ENCODE measurements at regions of chr7 and their contacts with region 1.

Region 1: GRCh38 chr7:111089822-111090426 is 1.0 kb upstream of the LRRN3 start:
- DNase-seq: no peak
- ATAC-seq: peak; percentile 71
- H3K4me3 ChIP-seq: no peak overlapping the region
- H3K27ac ChIP-seq: no peak overlapping the region
- H3K4me1 ChIP-seq: peaks cover 17% of the 10 kb centered on the region
- H3K27me3 ChIP-seq: no peaks in the 10 kb centered on the region
- CTCF ChIP-seq: peak; percentile 62 to 71 (median 68); a peak in 5 of 6 replicates
- EP300 ChIP-seq: no peak
- POLR2A ChIP-seq: no peak
- RAD21 ChIP-seq: peak; percentile 79

Region 2: DNA sequence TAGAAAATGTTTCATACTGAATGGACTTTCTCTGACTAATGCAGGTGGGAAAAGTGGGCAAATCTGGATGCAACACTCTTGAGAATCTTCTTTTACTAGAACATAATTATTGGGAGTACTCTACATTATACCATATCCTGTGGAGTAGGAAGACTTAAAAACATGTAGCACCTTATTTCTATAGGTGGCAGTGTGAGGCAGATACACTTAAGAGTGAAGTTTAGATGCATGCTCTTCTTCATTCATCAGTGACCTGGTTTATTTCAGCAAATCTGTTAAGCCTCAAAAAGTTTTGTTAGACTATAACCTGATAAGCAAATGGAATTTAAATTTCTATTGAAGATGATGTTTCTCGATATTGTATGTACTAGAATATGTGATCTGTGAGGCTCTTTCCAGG is 1086.1 kb before region 1 on chr7:
- CTCF ChIA-PET with region 1: no interaction called
- POLR2A ChIA-PET with region 1: no interaction called
- RAD21 ChIA-PET with region 1: no interaction called
- SMC1A ChIA-PET with region 1: no interaction called
- in situ Hi-C with region 1: no loop called
- intact Hi-C with region 1: loop called (anchors 10 kb)
- DNase-seq: no peak
- ATAC-seq: peak; percentile 57; the same call in 2 of the 3 replicates
- H3K4me3 ChIP-seq: no peak overlapping the region
- H3K27ac ChIP-seq: no peak overlapping the region
- H3K4me1 ChIP-seq: no peaks in the 10 kb centered on the region
- H3K27me3 ChIP-seq: no peaks in the 10 kb centered on the region
- CTCF ChIP-seq: no peak; a peak in 1 of 6 replicates
- EP300 ChIP-seq: no peak
- POLR2A ChIP-seq: no peak
- RAD21 ChIP-seq: peak; percentile 31; the same call in 1 of the 2 replicates

Region 3: GRCh38 chr7:111324228-111324627 is 234.3 kb after region 1 on chr7:
- CTCF ChIA-PET with region 1: no interaction called
- POLR2A ChIA-PET with region 1: no interaction called
- RAD21 ChIA-PET with region 1: no interaction called
- SMC1A ChIA-PET with region 1: no interaction called
- in situ Hi-C with region 1: no loop called
- intact Hi-C with region 1: loop called (anchors 5 kb)
- DNase-seq: peak; percentile 9
- ATAC-seq: peak; percentile 86
- H3K4me3 ChIP-seq: no peak overlapping the region
- H3K27ac ChIP-seq: no peak overlapping the region
- H3K4me1 ChIP-seq: peaks cover 3% of the 10 kb centered on the region; the same call in 1 of the 2 replicates
- H3K27me3 ChIP-seq: no peaks in the 10 kb centered on the region
- CTCF ChIP-seq: no peak
- EP300 ChIP-seq: 0 out of 4 replicates have a peak, but pooled peaks of 1 of the 2 experiments have one; percentile 11
- POLR2A ChIP-seq: no peak
- RAD21 ChIP-seq: no peak

Region 4: DNA sequence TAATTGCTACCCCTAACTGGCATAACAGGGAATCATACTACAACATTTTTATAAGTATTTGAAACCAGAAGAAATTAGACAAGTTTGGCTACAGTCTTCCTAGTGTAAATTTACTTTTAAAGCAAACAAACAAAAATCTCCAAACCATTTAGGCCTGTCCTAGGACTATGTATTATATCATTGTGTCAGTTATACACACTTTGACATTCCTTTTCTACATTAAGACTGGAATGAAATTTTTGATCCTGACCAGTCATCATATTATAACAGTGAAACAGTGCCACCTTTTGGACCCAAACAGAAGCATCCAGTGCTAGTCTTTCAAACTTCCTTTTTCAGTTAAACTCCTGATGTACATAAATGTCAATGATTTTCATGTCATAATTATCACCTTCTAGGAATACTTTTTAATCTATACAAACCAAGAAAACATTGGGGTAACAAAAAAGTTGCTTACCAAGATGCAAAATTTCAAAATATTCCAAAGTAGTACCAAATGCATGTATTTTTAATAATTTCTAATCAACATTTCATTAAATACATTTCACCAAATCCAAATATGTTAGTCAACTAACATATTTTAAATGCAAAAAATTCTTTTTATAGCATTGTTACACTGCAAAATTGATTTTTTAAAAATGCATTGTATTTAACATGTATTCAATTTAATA is 396.7 kb after region 1 on chr7:
- CTCF ChIA-PET with region 1: interaction called, 3 read pairs
- POLR2A ChIA-PET with region 1: no interaction called
- RAD21 ChIA-PET with region 1: interaction called, 3 read pairs
- SMC1A ChIA-PET with region 1: no interaction called
- in situ Hi-C with region 1: loop called (anchors 5 kb)
- intact Hi-C with region 1: loop called (anchors 2 kb)
- DNase-seq: peak; percentile 13
- ATAC-seq: peak; percentile 72
- H3K4me3 ChIP-seq: no peak overlapping the region
- H3K27ac ChIP-seq: no peak overlapping the region
- H3K4me1 ChIP-seq: no peaks in the 10 kb centered on the region
- H3K27me3 ChIP-seq: no peaks in the 10 kb centered on the region
- CTCF ChIP-seq: peak; percentile 60 to 75 (median 69)
- EP300 ChIP-seq: no peak
- POLR2A ChIP-seq: no peak
- RAD21 ChIP-seq: peak; percentile 83

Region 5: DNA sequence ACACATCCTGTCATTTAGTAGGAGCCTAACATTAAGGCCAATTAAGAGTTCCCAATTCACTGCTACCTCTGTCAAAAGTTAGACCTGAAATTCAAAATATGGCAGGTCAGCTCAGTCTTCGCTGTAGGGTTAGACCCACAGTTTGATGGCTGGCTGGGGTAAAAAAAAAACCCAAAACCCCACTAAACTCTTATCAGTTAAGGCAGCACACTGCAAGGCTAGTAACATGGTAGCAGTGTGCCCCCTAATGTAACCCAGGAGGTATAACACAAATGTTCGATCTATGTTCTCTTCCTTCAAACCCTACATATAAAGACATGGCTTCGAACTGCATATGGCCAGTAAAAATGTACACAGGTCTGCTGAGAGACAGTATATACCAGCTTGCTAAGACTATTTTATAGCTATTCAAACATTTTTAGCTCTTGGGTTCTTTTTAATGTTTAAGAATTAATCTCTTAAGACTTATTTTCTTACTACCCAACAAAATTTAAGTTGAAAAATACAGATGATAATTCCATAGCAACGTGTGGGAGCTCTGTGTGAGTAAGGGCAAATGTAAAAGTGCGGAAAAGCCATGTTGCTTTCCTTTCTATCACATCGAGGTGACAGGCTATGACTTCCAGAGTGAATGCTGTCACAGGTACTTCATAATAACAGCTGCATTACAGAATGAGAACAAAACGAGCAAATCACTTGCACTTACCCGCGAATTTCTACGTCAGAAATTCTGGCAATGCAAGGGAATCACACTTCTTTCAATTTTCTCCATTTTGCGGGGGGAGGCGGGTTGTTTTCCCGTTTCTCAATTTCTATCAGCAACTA is 640.8 kb after region 1 on chr7:
- CTCF ChIA-PET with region 1: interaction called, 7 read pairs
- POLR2A ChIA-PET with region 1: no interaction called
- RAD21 ChIA-PET with region 1: interaction called, 3 read pairs
- SMC1A ChIA-PET with region 1: interaction called, 3 read pairs
- in situ Hi-C with region 1: loop called (anchors 5 kb)
- intact Hi-C with region 1: loop called (anchors 5 kb)
- DNase-seq: no peak
- ATAC-seq: peak; percentile 88
- H3K4me3 ChIP-seq: no peak overlapping the region
- H3K27ac ChIP-seq: no peak overlapping the region
- H3K4me1 ChIP-seq: no peaks in the 10 kb centered on the region
- H3K27me3 ChIP-seq: no peaks in the 10 kb centered on the region
- CTCF ChIP-seq: peak; percentile 55 to 60 (median 57)
- EP300 ChIP-seq: no peak
- POLR2A ChIP-seq: no peak
- RAD21 ChIP-seq: peak; percentile 82

Measured in GM12878 (cell line).